Endothelial cell of umbilical vein (primary cell): ENCODE measurements at regions of chr2 and their contacts with region 1.

Region 1: GRCh38 chr2:169933124-169933711 is 106.0 kb downstream of the UBR3 start:
- DNase-seq: peak; percentile 54
- H3K4me3 ChIP-seq: no peak overlapping the region
- H3K27ac ChIP-seq: no peak overlapping the region
- H3K4me1 ChIP-seq: no peaks in the 10 kb centered on the region
- H3K27me3 ChIP-seq: no peaks in the 10 kb centered on the region
- CTCF ChIP-seq: peak; percentile 45 to 57
- POLR2A ChIP-seq: no peak

Region 2: GRCh38 chr2:168346725-168347477 is 1586.3 kb before region 1 on chr2:
- CTCF ChIA-PET with region 1: no interaction called
- POLR2A ChIA-PET with region 1: no interaction called
- dilution Hi-C with region 1: no loop called
- intact Hi-C with region 1: no loop called
- DNase-seq: peak; percentile 74
- H3K4me3 ChIP-seq: peak overlapping the region; percentile 33 to 89 (median 88)
- H3K27ac ChIP-seq: no peak overlapping the region
- H3K4me1 ChIP-seq: peaks cover 12% of the 10 kb centered on the region
- H3K27me3 ChIP-seq: peaks cover 5 to 6% of the 10 kb centered on the region in 2 experiments
- CTCF ChIP-seq: peak; percentile 65 to 66
- POLR2A ChIP-seq: no peak

Region 3: DNA sequence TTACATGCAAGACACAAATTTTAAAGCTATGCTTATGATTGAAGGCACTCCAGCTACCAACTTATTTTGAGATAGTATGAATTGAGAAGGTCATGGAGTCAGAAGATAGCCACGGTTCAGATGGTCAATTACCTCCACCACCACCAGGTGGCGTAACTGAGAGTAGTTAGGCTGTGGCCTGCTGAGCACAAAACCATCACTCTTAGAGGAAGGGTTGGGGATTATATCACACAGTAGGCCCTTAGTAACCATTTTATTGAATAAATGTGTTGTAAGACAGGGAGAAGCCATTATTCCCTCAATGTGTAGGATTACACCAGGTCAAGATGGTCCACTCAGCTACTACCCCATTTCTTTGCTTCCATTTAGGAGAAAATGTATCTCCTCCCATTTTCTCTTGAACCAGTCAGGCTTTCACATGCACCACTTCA is 404.9 kb before region 1 on chr2:
- CTCF ChIA-PET with region 1: interaction called, 6 read pairs
- POLR2A ChIA-PET with region 1: no interaction called
- dilution Hi-C with region 1: no loop called
- intact Hi-C with region 1: loop called (anchors 1 kb)
- DNase-seq: peak; percentile 68
- H3K4me3 ChIP-seq: no peak overlapping the region
- H3K27ac ChIP-seq: no peak overlapping the region
- H3K4me1 ChIP-seq: no peaks in the 10 kb centered on the region
- H3K27me3 ChIP-seq: no peaks in the 10 kb centered on the region
- CTCF ChIP-seq: peak; percentile 76 to 80
- POLR2A ChIP-seq: no peak

Region 4: GRCh38 chr2:169716938-169717690 is 216.1 kb before region 1 on chr2:
- CTCF ChIA-PET with region 1: no interaction called
- POLR2A ChIA-PET with region 1: no interaction called
- dilution Hi-C with region 1: no loop called
- intact Hi-C with region 1: no loop called
- DNase-seq: peak; percentile 94
- H3K4me3 ChIP-seq: no peak overlapping the region
- H3K27ac ChIP-seq: peak overlapping the region; percentile 47
- H3K4me1 ChIP-seq: peaks cover 15% of the 10 kb centered on the region
- H3K27me3 ChIP-seq: no peaks in the 10 kb centered on the region
- CTCF ChIP-seq: no peak
- POLR2A ChIP-seq: peak; percentile 25

Region 5: DNA sequence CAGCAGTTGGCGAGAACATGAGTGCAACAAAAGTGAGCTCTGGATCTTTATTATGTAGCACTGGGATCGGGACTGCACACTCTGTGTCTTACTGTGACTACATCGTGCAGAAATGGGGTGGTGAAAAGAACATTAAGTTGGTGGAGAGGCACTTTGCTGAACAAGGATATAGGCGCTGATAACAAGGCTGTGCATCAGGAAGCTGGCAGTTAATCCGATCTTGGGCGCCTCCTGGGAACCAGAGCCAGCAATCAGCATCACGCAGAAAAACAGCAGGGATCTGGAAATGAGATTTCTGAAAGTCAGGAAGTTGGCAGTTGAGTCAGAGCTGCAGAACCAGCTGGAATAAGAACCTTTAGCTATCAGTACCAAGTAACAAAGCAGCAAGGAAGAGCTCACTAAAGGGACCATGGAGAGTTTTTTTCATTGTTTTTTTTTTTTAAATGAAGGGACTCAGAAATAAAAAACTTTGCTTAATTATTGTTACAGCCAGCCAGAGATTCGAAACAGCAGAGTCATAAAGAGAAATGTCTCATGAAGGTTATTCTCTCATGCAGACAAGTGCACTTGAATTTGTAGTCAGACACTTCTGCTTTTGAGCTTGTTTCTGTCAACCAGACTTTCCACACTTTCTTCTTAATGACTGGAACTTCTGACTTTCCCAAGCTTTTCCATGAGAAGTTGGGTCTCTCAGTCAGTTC is 222.0 kb after region 1 on chr2:
- CTCF ChIA-PET with region 1: interaction called, 9 read pairs
- POLR2A ChIA-PET with region 1: no interaction called
- dilution Hi-C with region 1: no loop called
- intact Hi-C with region 1: loop called (anchors 5 kb)
- DNase-seq: peak; percentile 95
- H3K4me3 ChIP-seq: peak overlapping the region in 1 of 3 experiments; percentile 8
- H3K27ac ChIP-seq: peak overlapping the region; percentile 69
- H3K4me1 ChIP-seq: peaks cover 28% of the 10 kb centered on the region
- H3K27me3 ChIP-seq: no peaks in the 10 kb centered on the region
- CTCF ChIP-seq: no peak
- POLR2A ChIP-seq: peak; percentile 27

Region 6: DNA sequence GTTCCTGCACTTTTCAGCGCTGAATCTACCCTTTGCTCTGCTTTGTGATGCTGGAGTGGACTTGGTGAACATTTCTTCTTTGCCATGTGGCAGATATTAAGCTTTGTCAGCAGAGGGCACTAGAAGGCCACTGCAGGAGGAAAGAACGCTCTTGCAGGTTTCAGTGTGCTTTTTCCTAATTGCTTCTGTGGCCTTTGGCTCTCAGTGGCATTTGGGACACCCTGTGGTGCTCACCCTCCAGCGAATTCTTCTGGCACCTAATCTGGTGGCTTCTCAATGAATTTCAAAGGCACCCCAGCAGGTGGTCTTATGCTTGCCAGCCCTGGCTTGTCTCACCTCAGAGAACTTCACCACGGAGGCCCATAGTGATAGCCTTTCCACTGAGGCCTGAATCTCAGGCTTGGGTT is 391.4 kb after region 1 on chr2:
- CTCF ChIA-PET with region 1: interaction called, 3 read pairs
- POLR2A ChIA-PET with region 1: no interaction called
- dilution Hi-C with region 1: no loop called
- intact Hi-C with region 1: loop called (anchors 5 kb)
- DNase-seq: peak; percentile 40
- H3K4me3 ChIP-seq: no peak overlapping the region
- H3K27ac ChIP-seq: no peak overlapping the region
- H3K4me1 ChIP-seq: peaks cover 1% of the 10 kb centered on the region
- H3K27me3 ChIP-seq: peaks cover 3% of the 10 kb centered on the region in 2 experiments
- CTCF ChIP-seq: peak; percentile 56 to 57
- POLR2A ChIP-seq: no peak

Region 7: DNA sequence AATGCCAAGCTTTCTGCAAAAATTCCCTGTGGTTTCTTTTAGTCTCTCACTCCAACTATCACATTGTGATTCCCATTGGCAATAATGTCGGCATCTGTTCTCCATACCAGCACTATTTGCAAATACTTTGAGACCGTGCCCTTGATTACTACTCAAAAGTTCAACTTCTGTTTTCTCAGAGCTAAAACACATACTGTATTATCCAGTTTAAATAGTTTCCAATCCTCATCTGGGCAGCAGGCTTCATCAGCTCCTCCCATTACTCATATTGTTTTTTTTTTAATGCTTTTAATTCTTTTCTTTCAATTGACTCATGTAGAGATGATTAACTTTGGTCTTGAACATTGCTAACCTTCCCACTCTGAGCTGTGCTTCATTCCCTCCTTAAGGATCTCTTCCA is 1364.7 kb after region 1 on chr2:
- CTCF ChIA-PET with region 1: no interaction called
- POLR2A ChIA-PET with region 1: no interaction called
- dilution Hi-C with region 1: no loop called
- intact Hi-C with region 1: no loop called
- DNase-seq: no peak
- H3K4me3 ChIP-seq: no peak overlapping the region
- H3K27ac ChIP-seq: no peak overlapping the region
- H3K4me1 ChIP-seq: no peaks in the 10 kb centered on the region
- H3K27me3 ChIP-seq: no peaks in the 10 kb centered on the region
- CTCF ChIP-seq: no peak
- POLR2A ChIP-seq: no peak